ENCODE measurements at regions of chr2 and their contacts with region 1.

Region 1: GRCh38 chr2:20962939-20963557 is 80.8 kb downstream of the APOB start:
- DNase-seq: peak; percentile 49 to 72 (median 66)
- ATAC-seq: peak; percentile 89
- H3K4me3 ChIP-seq: no peak overlapping the region
- H3K27ac ChIP-seq: no peak overlapping the region
- H3K4me1 ChIP-seq: no peaks in the 10 kb centered on the region
- H3K27me3 ChIP-seq: peaks cover 0 to 20% of the 10 kb centered on the region in 2 experiments; a peak in 3 of 5 replicates
- CTCF ChIP-seq: peak; percentile 76 to 80 (median 77)
- EP300 ChIP-seq: no peak
- POLR2A ChIP-seq: no peak
- RAD21 ChIP-seq: peak; percentile 68 to 86

Region 2: DNA sequence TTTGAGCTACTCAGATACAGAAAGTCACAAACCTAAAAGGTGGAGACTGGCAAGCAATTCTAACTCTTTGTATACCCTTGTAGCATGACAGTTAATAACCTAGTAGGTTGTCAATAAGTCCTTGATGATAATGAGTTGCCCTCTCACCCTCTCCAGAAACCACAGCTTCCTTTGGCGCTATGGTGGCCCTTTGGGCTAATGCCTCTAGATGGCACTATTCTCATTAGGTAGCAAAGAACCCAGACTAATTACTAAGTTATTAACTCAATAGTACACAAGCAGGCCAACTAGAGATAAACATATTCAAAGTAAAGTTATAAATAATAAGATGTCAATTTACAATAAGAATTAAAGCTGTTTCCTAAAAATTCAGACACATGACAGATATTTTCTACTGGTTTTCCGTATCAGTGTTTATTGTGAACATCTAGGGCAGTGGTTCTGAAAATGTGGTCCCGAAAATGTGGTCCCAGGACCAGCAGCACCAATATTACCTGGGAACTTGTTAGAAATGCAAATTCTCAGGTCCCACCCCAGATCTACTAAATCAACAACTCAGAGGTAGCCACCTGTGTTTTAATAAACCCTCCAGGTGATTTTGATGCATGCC is 181.3 kb before region 1 on chr2:
- CTCF ChIA-PET with region 1: interaction called, 12 read pairs
- POLR2A ChIA-PET with region 1: no interaction called
- in situ Hi-C with region 1: no loop called
- intact Hi-C with region 1: loop called (anchors 1 kb)
- DNase-seq: peak; percentile 12 to 30 (median 26)
- ATAC-seq: peak; percentile 85
- H3K4me3 ChIP-seq: no peak overlapping the region
- H3K27ac ChIP-seq: no peak overlapping the region
- H3K4me1 ChIP-seq: no peaks in the 10 kb centered on the region; a peak in 1 of 5 replicates
- H3K27me3 ChIP-seq: no peaks in the 10 kb centered on the region
- CTCF ChIP-seq: peak; percentile 56 to 75 (median 69); a peak in 5 of 6 replicates
- EP300 ChIP-seq: no peak
- POLR2A ChIP-seq: no peak
- RAD21 ChIP-seq: peak; percentile 52 to 62